ENCODE measurements at regions of chr17 and their contacts with region 1.

Region 1: GRCh38 chr17:76643553-76644148 is at the start of gene ST6GALNAC1:
- DNase-seq: peak; percentile 28 to 66 (median 55)
- H3K4me3 ChIP-seq: peak within 1 kb of the TSS; percentile 36 to 59
- H3K4me3 Mint-ChIP-seq: peak within 1 kb of the TSS; percentile 81 to 96 (median 88)
- H3K27ac ChIP-seq: peak within 1 kb of the TSS; percentile 33
- H3K27ac Mint-ChIP-seq: peak within 1 kb of the TSS; percentile 67 to 91 (median 84)
- H3K4me1 ChIP-seq: peaks cover 36% of the 10 kb centered on the region
- H3K4me1 Mint-ChIP-seq: peaks cover 16 to 37% (median 34%) of the 10 kb centered on the region in 4 donors
- H3K27me3 ChIP-seq: no peaks in the 10 kb centered on the region
- H3K27me3 Mint-ChIP-seq: no peaks in the 10 kb centered on the region
- total RNA-seq, gene ST6GALNAC1: 12.7 to 14.6 TPM

Region 2: GRCh38 chr17:76567634-76568432 is 75.8 kb before region 1 on chr17:
- CTCF ChIA-PET with region 1: no interaction called
- POLR2A ChIA-PET with region 1: no interaction called
- intact Hi-C with region 1: no loop called
- DNase-seq: no peak
- H3K4me3 ChIP-seq: no peak overlapping the region
- H3K4me3 Mint-ChIP-seq: peak overlapping the region in 1 of 8 donors; percentile 23
- H3K27ac ChIP-seq: no peak overlapping the region
- H3K27ac Mint-ChIP-seq: peak overlapping the region; percentile 24 to 88 (median 60)
- H3K4me1 ChIP-seq: peaks cover 3% of the 10 kb centered on the region
- H3K4me1 Mint-ChIP-seq: peaks cover 24 to 47% (median 32%) of the 10 kb centered on the region in 4 donors
- H3K27me3 ChIP-seq: no peaks in the 10 kb centered on the region
- H3K27me3 Mint-ChIP-seq: no peaks in the 10 kb centered on the region

Region 3: DNA sequence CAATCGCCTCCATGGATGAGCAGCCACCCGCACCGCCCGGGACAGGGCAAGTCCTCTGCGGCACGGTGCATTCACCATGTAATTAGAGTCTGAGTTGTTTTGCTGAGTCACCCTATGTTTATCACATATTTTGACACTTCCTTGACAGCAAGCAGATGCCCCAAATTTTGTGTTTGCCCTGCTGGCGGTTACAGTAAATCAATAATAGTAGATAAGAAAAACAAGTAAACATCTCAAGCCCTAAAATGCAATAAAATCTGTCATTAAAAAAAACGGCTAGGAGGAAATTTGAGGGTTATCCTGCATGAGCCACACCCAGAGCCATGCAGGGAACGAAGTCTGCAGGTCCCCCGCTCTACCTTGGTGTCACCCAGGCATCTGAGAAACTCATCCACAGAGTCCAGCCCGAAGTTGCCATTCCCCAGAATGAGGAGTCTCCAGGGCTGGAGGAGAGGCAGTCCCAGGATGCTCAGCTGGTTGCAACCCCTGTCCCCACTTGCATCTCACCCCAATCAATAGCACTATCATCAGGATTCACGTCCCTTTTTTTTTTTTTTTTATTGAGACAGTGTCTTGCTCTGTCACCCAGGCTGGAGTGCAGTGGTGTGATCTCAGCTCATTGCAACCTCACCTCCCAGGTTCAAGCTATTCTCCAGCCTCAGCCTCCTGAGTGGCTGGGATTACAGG is 16.4 kb after region 1 on chr17:
- CTCF ChIA-PET with region 1: no interaction called
- POLR2A ChIA-PET with region 1: interaction called, 13 read pairs
- intact Hi-C with region 1: no loop called
- DNase-seq: peak in 4 of 5 donors; percentile 39 to 54 (median 49)
- H3K4me3 ChIP-seq: peak overlapping the region in 1 of 2 donors; percentile 15
- H3K4me3 Mint-ChIP-seq: peak overlapping the region; percentile 63 to 88 (median 77)
- H3K27ac ChIP-seq: peak overlapping the region; percentile 35
- H3K27ac Mint-ChIP-seq: peak overlapping the region; percentile 83 to 96 (median 92)
- H3K4me1 ChIP-seq: peaks cover 46% of the 10 kb centered on the region
- H3K4me1 Mint-ChIP-seq: peaks cover 30 to 44% (median 37%) of the 10 kb centered on the region in 4 donors
- H3K27me3 ChIP-seq: no peaks in the 10 kb centered on the region
- H3K27me3 Mint-ChIP-seq: peaks cover 0 to 3% of the 10 kb centered on the region in 2 donors

Region 4: DNA sequence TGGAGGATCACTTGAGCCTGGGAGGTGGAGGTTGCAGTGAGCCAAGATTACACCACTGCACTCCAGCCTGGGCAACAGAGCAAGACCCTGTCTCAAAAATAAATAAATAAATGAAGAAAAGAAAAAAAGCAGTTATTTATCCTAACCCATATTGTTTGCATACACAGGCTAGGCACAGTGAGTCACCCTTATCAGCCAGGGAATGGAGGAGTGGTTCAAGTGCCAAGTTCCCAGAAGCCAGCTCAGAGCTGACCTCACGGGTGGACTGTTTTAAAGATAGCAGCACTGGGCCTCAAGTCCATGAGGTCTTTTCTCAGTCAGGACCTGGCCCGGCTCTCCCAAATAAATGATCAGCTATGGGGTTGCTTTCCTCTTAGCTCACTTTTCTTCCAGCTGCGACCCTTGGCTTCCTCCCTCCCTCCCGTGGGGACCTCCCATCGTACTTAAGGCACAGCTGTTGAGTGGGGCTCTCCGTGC is 201.9 kb after region 1 on chr17:
- CTCF ChIA-PET with region 1: no interaction called
- POLR2A ChIA-PET with region 1: no interaction called
- intact Hi-C with region 1: no loop called
- DNase-seq: no peak
- H3K4me3 ChIP-seq: no peak overlapping the region
- H3K4me3 Mint-ChIP-seq: no peak overlapping the region
- H3K27ac ChIP-seq: no peak overlapping the region
- H3K27ac Mint-ChIP-seq: no peak overlapping the region
- H3K4me1 ChIP-seq: peaks cover 12% of the 10 kb centered on the region
- H3K4me1 Mint-ChIP-seq: peaks cover 0 to 8% (median 4%) of the 10 kb centered on the region in 4 donors
- H3K27me3 ChIP-seq: peaks cover 24% of the 10 kb centered on the region
- H3K27me3 Mint-ChIP-seq: peaks cover 27 to 45% of the 10 kb centered on the region in 2 donors